A549 (cell line): ENCODE measurements at regions of chr2 and their contacts with region 1.

Region 1: GRCh38 chr2:69724540-69725159 is 17.3 kb upstream of the ANXA4 start:
- DNase-seq: peak; percentile 69 to 86
- ATAC-seq: peak; percentile 93 to 96
- H3K4me3 ChIP-seq: peak overlapping the region; percentile 31
- H3K27ac ChIP-seq: peak overlapping the region; percentile 69 to 73
- H3K4me1 ChIP-seq: peaks cover 11% of the 10 kb centered on the region
- CTCF ChIP-seq: peak; percentile 99
- EP300 ChIP-seq: no peak
- POLR2A ChIP-seq: no peak
- RAD21 ChIP-seq: peak; percentile 99

Region 2: GRCh38 chr2:69565431-69565839 is 159.2 kb before region 1 on chr2:
- CTCF ChIA-PET with region 1: interaction called, 34 read pairs
- POLR2A ChIA-PET with region 1: no interaction called
- DNase-seq: peak; percentile 50 to 70
- ATAC-seq: peak; percentile 66 to 82; a peak in 5 of 6 replicates
- H3K4me3 ChIP-seq: no peak overlapping the region
- H3K27ac ChIP-seq: no peak overlapping the region
- H3K4me1 ChIP-seq: peaks cover 55% of the 10 kb centered on the region
- CTCF ChIP-seq: peak; percentile 80
- EP300 ChIP-seq: no peak
- POLR2A ChIP-seq: no peak
- RAD21 ChIP-seq: peak; percentile 45 to 54; a peak in 4 of 5 replicates

Region 3: DNA sequence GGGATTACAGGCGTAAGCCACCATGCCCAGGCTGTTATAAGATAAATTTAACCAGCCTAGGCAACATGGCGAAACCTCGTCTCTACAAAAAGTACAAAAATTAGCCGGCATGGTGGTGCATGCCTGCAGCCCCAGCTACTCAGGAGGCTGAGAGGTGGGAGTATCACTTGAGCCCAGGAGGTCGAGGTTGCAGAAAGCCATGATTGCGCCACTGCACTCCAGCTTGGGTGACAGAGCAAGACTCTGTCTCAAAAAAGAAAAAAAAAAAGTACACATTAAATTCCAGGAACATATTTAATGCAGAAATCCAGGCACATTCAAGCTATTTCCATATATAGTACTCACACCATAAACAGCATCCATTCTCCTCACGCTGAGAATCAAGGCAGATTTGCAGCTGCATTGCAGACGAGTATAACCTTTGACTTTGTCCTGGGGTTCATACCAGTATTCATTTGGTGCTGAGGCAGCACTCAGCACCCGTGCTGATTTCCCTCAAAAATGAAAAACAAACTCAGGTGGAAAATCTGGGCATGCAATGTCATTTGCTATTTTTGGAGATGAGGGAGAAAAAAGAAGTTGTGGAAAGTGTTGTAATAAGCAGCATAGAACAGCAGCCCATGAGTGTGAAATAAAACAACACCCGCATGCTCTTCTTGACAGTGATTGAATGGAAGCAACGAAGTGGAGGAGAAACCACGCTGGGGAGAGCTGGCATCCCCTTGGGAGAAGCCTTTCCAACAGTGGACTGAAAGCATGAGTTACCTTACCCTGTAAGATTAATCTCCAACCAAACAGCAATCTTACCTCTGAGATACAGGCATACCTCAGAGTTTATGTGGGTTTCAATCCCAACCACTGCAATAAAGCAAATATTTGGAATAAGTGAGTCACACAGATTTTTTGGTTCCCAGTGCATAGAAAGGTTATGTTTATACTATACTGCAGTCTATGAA is 29.5 kb before region 1 on chr2:
- CTCF ChIA-PET with region 1: interaction called, 14 read pairs
- POLR2A ChIA-PET with region 1: no interaction called
- DNase-seq: peak in 1 of 2 experiments; percentile 78
- ATAC-seq: peak; percentile 79 to 90
- H3K4me3 ChIP-seq: peak overlapping the region; percentile 20
- H3K27ac ChIP-seq: peak overlapping the region; percentile 53 to 76; a peak in 5 of 6 replicates
- H3K4me1 ChIP-seq: peaks cover 46% of the 10 kb centered on the region
- CTCF ChIP-seq: no peak
- EP300 ChIP-seq: no peak; a peak in 1 of 5 replicates
- POLR2A ChIP-seq: no peak
- RAD21 ChIP-seq: no peak; a peak in 2 of 5 replicates

Region 4: DNA sequence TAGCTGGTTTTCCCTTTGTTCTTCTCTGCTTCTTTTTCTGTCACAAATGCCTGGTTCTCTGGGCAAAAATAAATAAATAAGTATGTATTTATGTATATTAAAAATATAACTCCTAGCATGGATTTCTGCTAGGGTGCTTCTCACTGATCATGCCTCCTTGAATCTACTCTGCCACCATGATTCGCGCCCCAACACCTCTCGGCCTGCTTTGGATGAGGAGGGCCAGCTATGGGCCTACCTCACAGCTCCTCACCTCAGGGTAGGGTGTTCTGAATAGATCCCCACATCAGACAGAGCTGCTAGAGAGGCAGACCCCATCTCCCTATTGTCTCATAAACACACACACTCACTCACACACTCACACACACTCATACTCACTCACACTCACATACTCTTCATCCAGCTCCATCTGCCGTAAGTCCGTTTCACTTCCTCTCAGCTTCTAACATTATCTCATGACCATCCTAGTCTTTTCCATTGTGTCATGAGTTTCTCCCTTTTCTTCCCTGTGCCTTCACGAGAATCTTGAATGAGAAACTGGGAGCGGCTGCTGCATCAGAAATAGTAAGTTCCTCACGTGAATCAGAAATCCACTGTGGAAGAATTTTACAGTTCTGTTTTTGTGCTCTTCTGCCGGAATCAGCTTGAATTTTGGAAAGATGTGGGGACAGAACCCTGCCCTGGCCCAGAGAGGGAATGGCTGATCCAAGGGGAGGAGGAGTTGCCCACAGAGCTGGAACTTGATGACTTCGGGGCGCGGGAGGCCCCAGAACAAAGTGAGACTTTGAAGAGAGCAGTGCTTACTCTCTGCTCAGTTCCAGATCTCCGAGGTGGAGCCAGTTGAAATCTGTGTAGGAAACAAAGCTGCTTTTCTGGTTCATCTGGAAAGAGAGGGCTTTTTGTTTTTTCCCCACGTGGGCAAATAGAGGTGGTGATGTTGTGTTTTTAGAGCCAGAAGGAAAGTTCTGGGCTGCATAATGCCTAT is 38.2 kb after region 1 on chr2:
- CTCF ChIA-PET with region 1: interaction called, 22 read pairs
- POLR2A ChIA-PET with region 1: interaction called, 3 read pairs
- DNase-seq: no peak
- ATAC-seq: no peak; a peak in 1 of 6 replicates
- H3K4me3 ChIP-seq: no peak overlapping the region
- H3K27ac ChIP-seq: peak overlapping the region; percentile 22 to 62; a peak in 5 of 6 replicates
- H3K4me1 ChIP-seq: peaks cover 88% of the 10 kb centered on the region
- CTCF ChIP-seq: no peak
- EP300 ChIP-seq: no peak
- POLR2A ChIP-seq: no peak
- RAD21 ChIP-seq: no peak

Region 5: DNA sequence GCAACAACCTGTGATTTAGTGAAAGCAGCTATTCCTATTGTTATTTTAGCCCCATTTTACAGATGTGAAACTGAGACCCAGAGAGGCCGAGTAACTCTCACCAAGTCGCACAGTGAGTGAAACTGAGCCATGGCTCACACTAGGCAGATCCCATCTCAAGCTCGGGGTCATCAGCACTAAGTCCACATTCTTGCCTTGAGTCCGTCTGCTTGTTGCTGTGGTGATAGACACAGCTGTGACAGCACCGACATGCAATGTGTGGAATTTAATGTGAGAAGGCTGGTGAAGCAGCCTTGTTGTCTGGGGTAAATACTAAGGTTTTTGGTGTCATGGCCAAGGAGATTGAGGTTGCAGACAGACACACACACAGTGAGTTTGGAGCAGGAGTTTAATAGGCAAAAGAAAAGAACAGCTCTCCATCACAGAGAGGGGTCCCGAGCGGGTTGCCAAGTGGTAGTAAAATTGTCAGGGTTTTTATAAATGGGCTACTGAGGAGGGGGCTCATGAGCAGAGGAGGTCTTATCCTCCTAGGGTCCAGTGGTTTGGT is 64.6 kb after region 1 on chr2:
- CTCF ChIA-PET with region 1: interaction called, 26 read pairs
- POLR2A ChIA-PET with region 1: no interaction called
- DNase-seq: peak; percentile 64 to 91
- ATAC-seq: peak; percentile 95 to 96
- H3K4me3 ChIP-seq: no peak overlapping the region
- H3K27ac ChIP-seq: peak overlapping the region; percentile 68 to 79
- H3K4me1 ChIP-seq: peaks cover 64% of the 10 kb centered on the region
- CTCF ChIP-seq: no peak
- EP300 ChIP-seq: no peak
- POLR2A ChIP-seq: no peak
- RAD21 ChIP-seq: no peak; a peak in 1 of 5 replicates

Region 6: DNA sequence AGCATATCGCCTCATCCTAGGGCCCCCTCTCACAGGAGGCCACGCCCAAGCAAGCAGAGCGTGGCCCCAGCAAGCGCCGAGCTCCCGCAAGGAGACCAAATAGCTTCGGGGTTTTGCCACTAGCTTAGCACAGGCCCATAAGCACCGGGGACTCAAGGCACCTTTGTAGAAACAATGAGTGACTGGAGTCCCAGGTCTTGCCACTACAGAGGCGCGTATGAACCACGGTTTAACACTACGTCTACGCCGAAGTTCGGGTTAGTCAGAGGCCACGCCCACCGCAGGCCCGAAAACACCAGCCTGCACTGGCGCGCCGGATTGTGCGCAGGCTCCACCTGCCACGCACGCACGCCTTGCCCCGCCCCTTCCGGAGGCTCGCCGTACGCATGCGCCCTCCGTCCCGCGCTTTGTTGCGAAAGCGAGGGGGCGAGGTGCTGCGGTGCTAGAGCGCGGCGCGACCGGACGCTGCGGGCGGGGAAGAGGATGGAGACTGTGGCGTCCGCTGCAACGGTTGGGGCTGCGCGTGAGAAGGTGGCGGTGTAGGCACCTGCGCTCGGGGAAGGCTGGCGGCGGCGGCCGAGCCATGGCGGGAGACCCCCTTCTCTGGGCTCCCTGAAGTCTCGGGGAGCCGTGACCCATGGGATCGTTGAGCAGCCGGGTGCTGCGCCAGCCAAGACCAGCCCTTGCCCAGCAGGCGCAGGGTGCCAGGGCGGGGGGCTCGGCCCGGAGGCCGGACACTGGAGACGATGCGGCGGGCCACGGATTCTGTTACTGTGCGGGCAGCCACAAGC is 104.8 kb after region 1 on chr2 and contains the start of gene GMCL1:
- CTCF ChIA-PET with region 1: interaction called, 61 read pairs
- POLR2A ChIA-PET with region 1: interaction called, 9 read pairs
- DNase-seq: peak; percentile 73 to 97
- ATAC-seq: peak; percentile 92 to 95
- H3K4me3 ChIP-seq: peak within 1 kb of the TSS; percentile 91
- H3K27ac ChIP-seq: peak within 1 kb of the TSS; percentile 86 to 88
- H3K4me1 ChIP-seq: peaks cover 15% of the 10 kb centered on the region
- CTCF ChIP-seq: no peak
- EP300 ChIP-seq: 0 out of 5 replicates have a peak, but pooled peaks of 1 of the 2 experiments have one; percentile 29
- POLR2A ChIP-seq: peak; percentile 72
- RAD21 ChIP-seq: no peak; a peak in 1 of 5 replicates
- polyA plus RNA-seq, gene GMCL1: 16.3 and 21.1 TPM in 2 replicates

Region 7: DNA sequence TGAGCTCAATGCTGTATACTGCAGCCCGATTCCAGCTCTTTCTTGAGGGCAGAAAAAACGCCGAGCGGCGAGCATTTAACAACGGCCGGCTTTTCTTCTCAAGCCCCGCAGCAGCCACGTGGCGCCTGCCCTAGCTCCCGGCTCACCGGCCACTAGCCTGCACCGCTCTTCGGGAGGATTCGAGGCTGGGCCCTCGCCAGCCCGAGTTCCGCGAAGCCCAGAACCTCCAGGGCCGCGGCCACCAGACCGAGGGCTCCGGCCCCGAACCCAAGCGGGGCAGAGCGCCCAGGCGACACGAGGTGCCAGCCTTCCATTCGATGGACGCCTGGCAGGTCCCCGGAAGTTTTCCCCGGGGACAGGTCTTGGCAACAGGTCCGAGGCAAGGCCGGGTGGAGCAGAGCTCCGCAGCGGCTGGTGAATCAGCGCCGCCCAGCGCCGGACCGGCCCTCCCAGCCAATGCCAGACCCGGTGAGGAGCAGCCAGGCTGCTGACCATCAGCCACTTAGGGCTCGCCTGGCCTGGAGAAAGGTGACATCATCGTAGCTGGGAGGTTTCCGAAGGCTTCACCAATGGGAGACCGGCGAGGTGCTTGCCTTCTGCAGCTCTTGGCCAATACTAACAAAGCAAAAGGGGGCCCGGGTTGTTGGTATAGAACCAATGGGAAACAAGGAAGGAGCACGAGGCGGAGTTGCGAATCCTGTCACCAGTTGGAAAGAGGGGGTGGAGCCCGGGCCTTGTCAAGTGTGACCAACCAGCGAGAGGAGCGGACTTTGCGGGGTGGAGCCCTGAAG is 189.7 kb after region 1 on chr2:
- CTCF ChIA-PET with region 1: interaction called, 16 read pairs
- POLR2A ChIA-PET with region 1: interaction called, 17 read pairs
- DNase-seq: peak; percentile 99 to 100
- ATAC-seq: peak; percentile 94 to 95
- H3K4me3 ChIP-seq: peak overlapping the region; percentile 57
- H3K27ac ChIP-seq: peak overlapping the region; percentile 86 to 95
- H3K4me1 ChIP-seq: peaks cover 17% of the 10 kb centered on the region; the same call in 2 of the 3 replicates
- CTCF ChIP-seq: peak; percentile 42
- EP300 ChIP-seq: no peak
- POLR2A ChIP-seq: peak; percentile 88
- RAD21 ChIP-seq: peak; percentile 50 to 71

Region 8: DNA sequence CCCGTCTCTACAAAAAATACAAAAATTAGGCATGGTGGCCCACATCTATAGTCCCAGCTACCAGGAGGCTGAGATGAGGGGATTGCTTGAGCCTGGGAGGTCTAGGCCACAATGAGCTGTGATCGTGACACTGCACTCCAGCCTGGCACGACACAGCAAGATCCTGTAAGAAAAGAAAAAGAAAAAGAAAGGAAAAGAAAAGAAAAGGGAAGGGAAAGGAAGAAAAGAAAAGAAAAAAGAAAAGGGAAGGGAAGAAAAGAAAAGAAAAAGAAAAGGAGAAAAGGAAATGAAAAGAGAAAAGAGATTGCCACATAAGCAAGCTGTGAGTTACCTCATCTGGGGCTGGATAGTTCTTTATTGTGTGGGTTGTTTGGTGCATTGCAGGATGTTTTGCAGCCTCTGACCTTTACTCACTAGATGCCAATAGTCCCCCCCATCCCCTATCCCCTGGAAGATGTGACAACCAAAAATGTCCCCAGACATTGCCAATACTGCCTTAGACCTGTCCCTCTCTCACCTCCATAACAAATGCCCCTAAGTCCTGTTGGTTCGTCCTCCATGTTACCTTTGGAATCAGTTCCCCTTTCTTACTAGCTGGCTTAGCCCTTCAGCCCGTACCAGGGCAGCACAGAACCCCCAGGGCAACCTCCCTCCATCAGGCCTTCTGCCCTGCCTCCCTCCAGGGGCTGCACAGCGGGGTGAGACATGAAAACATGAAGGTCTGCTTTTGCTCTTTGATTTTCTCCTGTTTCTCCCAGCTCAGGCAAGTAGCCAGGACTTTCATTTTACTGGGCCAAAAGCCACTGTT is 227.9 kb after region 1 on chr2:
- CTCF ChIA-PET with region 1: no interaction called
- POLR2A ChIA-PET with region 1: no interaction called
- DNase-seq: no peak
- ATAC-seq: no peak
- H3K4me3 ChIP-seq: no peak overlapping the region
- H3K27ac ChIP-seq: 0 out of 6 replicates have a peak overlapping the region, but pooled peaks of 1 of the 2 experiments have one; percentile 16
- H3K4me1 ChIP-seq: peaks cover under 1% of the 10 kb centered on the region; the same call in 2 of the 3 replicates
- CTCF ChIP-seq: no peak
- EP300 ChIP-seq: no peak
- POLR2A ChIP-seq: no peak
- RAD21 ChIP-seq: no peak